ENCODE measurements at regions of chr19 and their contacts with region 1.

Region 1: DNA sequence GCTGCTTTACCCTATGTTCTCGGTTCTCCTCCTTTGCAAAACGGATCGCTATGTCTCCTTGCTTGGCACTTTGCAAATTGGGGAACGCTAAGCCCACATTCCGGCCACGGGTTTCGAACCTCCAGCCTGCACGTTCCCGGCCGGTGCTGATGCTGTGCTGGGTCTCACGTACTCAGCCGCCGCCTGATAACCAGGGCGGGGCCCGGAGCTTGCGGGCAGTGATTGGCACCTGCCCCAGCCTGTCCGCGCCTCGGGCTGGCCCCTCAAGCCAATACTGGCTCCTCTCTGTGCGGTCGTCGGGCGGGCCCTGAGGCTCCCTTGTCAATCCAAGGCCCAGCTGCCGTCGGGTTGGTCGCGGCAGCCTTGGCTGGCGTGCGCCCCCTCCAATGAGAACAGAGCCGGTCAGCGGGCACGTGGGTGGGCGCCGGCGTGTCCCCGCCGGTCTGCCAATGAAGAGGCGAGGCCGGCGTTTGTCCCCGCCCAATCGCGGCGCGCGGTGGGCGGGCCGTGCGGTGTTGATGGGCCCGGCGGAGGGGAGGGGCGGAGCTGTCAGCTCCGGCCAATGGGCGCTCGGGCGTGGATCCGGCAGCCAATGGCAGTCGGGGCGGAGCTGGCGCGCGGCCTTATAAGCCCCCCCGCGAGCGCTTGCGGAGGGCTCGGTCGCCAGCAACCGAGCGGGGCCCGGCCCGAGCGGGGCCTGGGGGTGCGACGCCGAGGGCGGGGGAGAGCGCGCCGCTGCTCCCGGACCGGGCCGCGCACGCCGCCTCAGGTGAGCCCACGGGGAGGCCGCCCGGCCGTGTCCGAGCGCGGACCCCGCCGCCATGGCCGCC is at the start of gene KDM4B:
- DNase-seq: peak; percentile 100
- ATAC-seq: peak; percentile 96
- H3K4me3 Mint-ChIP-seq: peak within 1 kb of the TSS; percentile 91
- H3K27ac Mint-ChIP-seq: peak within 1 kb of the TSS; percentile 90
- H3K4me1 Mint-ChIP-seq: peaks cover 30% of the 10 kb centered on the region
- H3K27me3 Mint-ChIP-seq: no peaks in the 10 kb centered on the region
- total RNA-seq, gene KDM4B: 33.9 to 35.8 TPM

Region 2: GRCh38 chr19:3275583-3276340 is 1692.9 kb before region 1 on chr19:
- CTCF ChIA-PET with region 1: no interaction called
- POLR2A ChIA-PET with region 1: no interaction called
- intact Hi-C with region 1: loop called in 1 of 2 experiments (anchors 5 kb)
- DNase-seq: peak; percentile 99
- ATAC-seq: peak; percentile 83
- H3K4me3 Mint-ChIP-seq: peak overlapping the region; percentile 73
- H3K27ac Mint-ChIP-seq: peak overlapping the region; percentile 80
- H3K4me1 Mint-ChIP-seq: peaks cover 8% of the 10 kb centered on the region
- H3K27me3 Mint-ChIP-seq: peaks cover 9% of the 10 kb centered on the region

Region 3: GRCh38 chr19:4669723-4670480 is 298.8 kb before region 1 on chr19 and contains the start of gene MYDGF:
- CTCF ChIA-PET with region 1: no interaction called
- POLR2A ChIA-PET with region 1: no interaction called
- intact Hi-C with region 1: loop called in 1 of 2 experiments (anchors 1 kb)
- DNase-seq: peak; percentile 97
- ATAC-seq: peak; percentile 99
- H3K4me3 Mint-ChIP-seq: peak within 1 kb of the TSS; percentile 85
- H3K27ac Mint-ChIP-seq: peak within 1 kb of the TSS; percentile 75
- H3K4me1 Mint-ChIP-seq: peaks cover 18% of the 10 kb centered on the region
- H3K27me3 Mint-ChIP-seq: no peaks in the 10 kb centered on the region
- total RNA-seq, gene MYDGF: 34.7 to 53.8 TPM

Region 4: GRCh38 chr19:4815426-4816201 is 153.1 kb before region 1 on chr19:
- CTCF ChIA-PET with region 1: interaction called, 5 read pairs
- POLR2A ChIA-PET with region 1: no interaction called
- intact Hi-C with region 1: loop called in 1 of 2 experiments (anchors 2 kb)
- DNase-seq: peak; percentile 84
- ATAC-seq: peak; percentile 87
- H3K4me3 Mint-ChIP-seq: peak overlapping the region; percentile 55
- H3K27ac Mint-ChIP-seq: peak overlapping the region; percentile 77
- H3K4me1 Mint-ChIP-seq: peaks cover 26% of the 10 kb centered on the region
- H3K27me3 Mint-ChIP-seq: no peaks in the 10 kb centered on the region

Region 5: DNA sequence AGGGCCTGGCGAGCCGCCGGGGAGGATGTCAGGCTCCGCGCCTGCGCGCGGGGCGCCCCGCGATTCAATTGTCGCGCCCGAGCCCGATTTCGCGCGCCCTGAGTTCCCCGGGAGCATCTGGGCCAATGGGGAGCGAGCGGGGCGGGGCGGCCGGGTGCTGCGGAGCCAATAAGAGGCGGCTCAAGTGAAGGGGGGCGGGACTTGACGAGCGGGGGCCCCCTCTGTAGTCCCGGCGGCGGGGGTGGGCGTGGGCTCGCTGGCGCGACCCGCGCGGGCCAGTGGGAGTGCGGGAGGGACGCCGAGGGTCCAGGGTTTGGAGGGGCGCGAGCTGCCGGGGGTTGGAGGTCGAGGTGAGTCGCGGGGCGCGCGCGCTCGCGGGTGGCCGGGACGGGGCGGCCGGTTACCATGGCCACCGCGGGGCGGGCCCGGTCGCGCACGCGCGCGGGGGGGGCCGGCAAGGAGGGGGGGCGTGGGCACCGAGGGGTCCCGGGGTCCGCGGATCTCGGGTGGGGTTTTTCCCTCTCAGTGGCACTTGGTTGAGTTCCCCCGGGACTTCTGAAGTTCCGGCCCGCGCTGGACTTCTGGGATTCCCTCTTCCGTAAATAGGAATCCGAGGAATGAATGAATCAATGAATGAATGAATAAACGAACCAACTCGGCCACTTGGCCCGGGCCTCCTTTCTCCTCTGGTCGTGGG is 58.6 kb before region 1 on chr19:
- CTCF ChIA-PET with region 1: no interaction called
- POLR2A ChIA-PET with region 1: interaction called, 9 read pairs
- intact Hi-C with region 1: loop called (anchors 1 to 2 kb)
- DNase-seq: peak; percentile 98
- ATAC-seq: peak; percentile 78
- H3K4me3 Mint-ChIP-seq: peak overlapping the region; percentile 83
- H3K27ac Mint-ChIP-seq: peak overlapping the region; percentile 90
- H3K4me1 Mint-ChIP-seq: peaks cover 42% of the 10 kb centered on the region
- H3K27me3 Mint-ChIP-seq: no peaks in the 10 kb centered on the region

Region 6: GRCh38 chr19:5622463-5623396 is 654.1 kb after region 1 on chr19 and contains the starts of genes SAFB and SAFB2:
- CTCF ChIA-PET with region 1: no interaction called
- POLR2A ChIA-PET with region 1: no interaction called
- intact Hi-C with region 1: loop called in 1 of 2 experiments (anchors 1 kb)
- DNase-seq: peak; percentile 100
- ATAC-seq: peak; percentile 92
- H3K4me3 Mint-ChIP-seq: peak within 1 kb of the TSS; percentile 100
- H3K27ac Mint-ChIP-seq: peak within 1 kb of the TSS; percentile 100
- H3K4me1 Mint-ChIP-seq: peaks cover 66% of the 10 kb centered on the region
- H3K27me3 Mint-ChIP-seq: no peaks in the 10 kb centered on the region
- total RNA-seq, gene SAFB: 100 to 118 TPM
- total RNA-seq, gene SAFB2: 65.0 to 78.6 TPM

Region 7: DNA sequence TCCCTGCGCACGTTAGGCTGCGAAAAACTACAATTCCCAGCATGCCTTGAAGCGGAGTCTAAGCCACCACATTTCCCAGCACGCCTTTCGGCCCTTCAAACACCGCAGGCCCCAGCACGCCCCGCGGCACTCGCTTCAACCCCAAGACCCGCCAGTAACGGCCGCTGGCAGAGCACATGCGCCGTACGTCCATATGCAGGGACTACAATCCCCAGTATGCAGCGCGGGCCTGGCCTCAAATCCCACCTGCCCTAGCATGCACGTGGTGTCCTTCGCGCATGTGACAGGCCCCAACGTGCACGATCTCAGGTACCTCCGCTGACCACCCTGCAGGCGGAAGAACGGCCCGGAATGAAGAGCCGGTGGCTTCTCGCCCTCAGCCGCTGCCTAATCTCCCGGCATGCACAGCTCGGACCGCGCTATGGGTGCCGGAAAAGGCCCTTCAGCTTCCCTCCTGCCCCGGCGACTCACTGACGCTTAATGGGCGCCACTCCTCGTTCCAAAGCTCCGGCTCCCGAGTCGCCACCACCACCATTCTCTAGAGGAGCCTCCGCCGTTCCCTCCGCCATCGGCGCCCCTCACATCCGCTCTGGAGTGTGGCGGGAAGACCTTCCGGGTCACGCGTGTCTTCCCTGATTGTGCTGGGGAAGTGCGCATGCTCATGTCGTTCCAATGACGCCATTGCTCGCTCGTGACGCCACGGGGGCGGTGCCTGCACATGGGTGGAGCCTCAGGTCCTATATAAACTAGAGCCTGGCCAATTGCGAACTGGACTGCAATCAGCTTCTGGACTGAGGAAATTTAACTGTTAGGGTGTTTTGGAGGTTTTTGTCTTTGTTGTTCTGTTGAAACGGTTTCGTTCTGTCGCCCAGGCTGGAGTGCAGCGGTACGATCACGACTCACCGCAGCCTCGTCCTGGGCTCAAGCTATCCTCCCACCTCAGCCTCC is 822.2 kb after region 1 on chr19 and contains the start of gene DUS3L:
- CTCF ChIA-PET with region 1: no interaction called
- POLR2A ChIA-PET with region 1: no interaction called
- intact Hi-C with region 1: loop called in 1 of 2 experiments (anchors 2 kb)
- DNase-seq: peak; percentile 98
- ATAC-seq: peak; percentile 97
- H3K4me3 Mint-ChIP-seq: peak within 1 kb of the TSS; percentile 98
- H3K27ac Mint-ChIP-seq: peak within 1 kb of the TSS; percentile 100
- H3K4me1 Mint-ChIP-seq: peaks cover 13% of the 10 kb centered on the region
- H3K27me3 Mint-ChIP-seq: no peaks in the 10 kb centered on the region
- total RNA-seq, gene DUS3L: 59.4 to 63.9 TPM